Heart left ventricle (tissue), 16 donors: ENCODE measurements at regions of chr14 and their contacts with region 1.

Region 1: DNA sequence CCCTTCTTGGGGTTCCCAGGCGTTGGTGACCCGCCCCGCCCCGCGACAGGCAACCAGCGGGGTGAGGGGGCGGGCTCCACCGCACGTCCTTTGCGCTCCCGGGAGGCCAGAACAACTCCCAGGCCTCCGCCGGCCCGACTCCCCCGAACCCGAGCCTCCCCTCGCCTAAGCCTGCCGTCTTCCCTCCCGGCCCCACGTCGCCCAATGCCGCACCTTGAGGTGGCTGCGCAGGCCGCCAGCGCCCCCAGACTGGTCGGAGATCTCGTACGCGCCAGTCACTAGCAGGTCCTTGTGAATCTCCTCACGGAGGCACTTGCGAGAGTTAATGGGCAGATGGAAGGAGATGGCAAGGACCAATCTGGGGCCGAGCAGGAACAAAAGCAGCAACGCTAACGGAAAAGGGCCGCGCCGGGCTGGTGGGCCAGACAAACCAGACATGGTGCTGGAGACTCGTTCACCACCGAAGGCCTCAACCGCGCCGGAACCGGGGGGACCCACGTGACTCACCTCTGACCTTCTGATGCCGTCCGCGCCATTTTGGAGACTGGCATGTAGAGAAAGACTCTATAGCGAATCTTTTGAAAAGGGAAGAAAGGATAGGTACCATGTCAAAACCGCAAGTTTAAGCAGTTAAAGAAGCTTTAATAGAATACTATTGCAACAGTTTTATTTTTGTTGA is at the start of gene TMED10:
- DNase-seq: peak; percentile 87 to 95 (median 90)
- ATAC-seq: peak; percentile 95 to 97 (median 96)
- H3K4me3 ChIP-seq: peak within 1 kb of the TSS; percentile 70 to 99 (median 89)
- H3K27ac ChIP-seq: peak within 1 kb of the TSS; percentile 87 to 98 (median 96)
- H3K4me1 ChIP-seq: peaks cover 3 to 48% (median 25%) of the 10 kb centered on the region in 12 donors
- H3K27me3 ChIP-seq: no peaks in the 10 kb centered on the region
- CTCF ChIP-seq: peak in 2 of 12 donors; percentile 1 to 23
- POLR2A ChIP-seq: peak in 1 of 2 donors; percentile 36
- total RNA-seq, gene TMED10: 235 to 362 (median 275) TPM

Region 2: DNA sequence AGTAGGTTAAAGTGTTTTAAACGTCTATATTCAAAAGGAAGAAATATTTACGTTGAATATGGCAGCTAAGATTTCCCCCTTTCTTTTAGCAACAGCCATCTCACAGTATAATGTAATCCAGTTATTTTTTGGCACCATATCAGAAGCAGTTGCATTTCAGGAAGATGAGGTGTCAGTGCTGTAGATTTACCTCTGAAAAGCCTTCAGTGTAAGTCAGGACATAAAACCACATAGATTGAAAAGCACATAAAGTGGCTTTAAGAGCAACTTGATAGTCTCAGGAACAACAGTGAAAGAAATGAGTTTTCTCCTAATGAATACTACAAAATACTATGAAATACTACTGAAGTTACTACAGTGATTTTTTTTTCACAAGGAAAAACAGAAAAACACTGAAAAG is 132.0 kb before region 1 on chr14:
- intact Hi-C with region 1: no loop called
- DNase-seq: no peak
- ATAC-seq: no peak
- H3K4me3 ChIP-seq: no peak overlapping the region
- H3K27ac ChIP-seq: no peak overlapping the region
- H3K4me1 ChIP-seq: peaks cover 0 to 38% (median 14%) of the 10 kb centered on the region in 12 donors
- H3K27me3 ChIP-seq: no peaks in the 10 kb centered on the region
- CTCF ChIP-seq: no peak
- POLR2A ChIP-seq: no peak

Region 3: GRCh38 chr14:75126679-75127473 is 49.4 kb before region 1 on chr14 and contains the start of gene NEK9:
- intact Hi-C with region 1: loop called in 3 of 10 experiments (anchors 5 kb)
- DNase-seq: peak; percentile 93 to 94 (median 93)
- ATAC-seq: peak; percentile 94 to 96 (median 96)
- H3K4me3 ChIP-seq: peak within 1 kb of the TSS; percentile 57 to 96 (median 80)
- H3K27ac ChIP-seq: peak within 1 kb of the TSS; percentile 87 to 99 (median 97)
- H3K4me1 ChIP-seq: peaks cover 3 to 47% (median 29%) of the 10 kb centered on the region in 12 donors
- H3K27me3 ChIP-seq: no peaks in the 10 kb centered on the region
- CTCF ChIP-seq: peak in 2 of 12 donors; percentile 11 to 14
- POLR2A ChIP-seq: peak in 1 of 2 donors; percentile 56
- total RNA-seq, gene NEK9: 69.0 to 114 (median 98.3) TPM

Region 4: GRCh38 chr14:75141967-75142366 is 34.3 kb before region 1 on chr14:
- intact Hi-C with region 1: loop called in 1 of 10 experiments (anchors 5 kb)
- DNase-seq: no peak
- ATAC-seq: peak in 2 of 4 donors; percentile 32 to 55
- H3K4me3 ChIP-seq: no peak overlapping the region
- H3K27ac ChIP-seq: peak overlapping the region in 2 of 12 donors; percentile 30 to 60
- H3K4me1 ChIP-seq: peaks cover 6 to 92% (median 48%) of the 10 kb centered on the region in 12 donors
- H3K27me3 ChIP-seq: no peaks in the 10 kb centered on the region
- CTCF ChIP-seq: peak in 10 of 12 donors; percentile 12 to 50 (median 41)
- POLR2A ChIP-seq: no peak

Region 5: GRCh38 chr14:75236901-75237419 is 60.7 kb after region 1 on chr14:
- intact Hi-C with region 1: loop called in 4 of 10 experiments (anchors 1 to 10 kb)
- DNase-seq: no peak
- ATAC-seq: peak in 1 of 4 donors; percentile 1
- H3K4me3 ChIP-seq: no peak overlapping the region
- H3K27ac ChIP-seq: peak overlapping the region; percentile 79 to 97 (median 88)
- H3K4me1 ChIP-seq: peaks cover 0 to 49% (median 29%) of the 10 kb centered on the region in 12 donors
- H3K27me3 ChIP-seq: no peaks in the 10 kb centered on the region
- CTCF ChIP-seq: no peak
- POLR2A ChIP-seq: no peak

Region 6: GRCh38 chr14:75278422-75279161 is 102.3 kb after region 1 on chr14 and contains the start of gene FOS:
- intact Hi-C with region 1: loop called in 3 of 10 experiments (anchors 5 kb)
- DNase-seq: peak; percentile 94 to 95 (median 94)
- ATAC-seq: peak; percentile 73 to 82 (median 80)
- H3K4me3 ChIP-seq: peak within 1 kb of the TSS; percentile 56 to 98 (median 88)
- H3K27ac ChIP-seq: peak within 1 kb of the TSS; percentile 91 to 100 (median 99)
- H3K4me1 ChIP-seq: peaks cover 6 to 71% (median 32%) of the 10 kb centered on the region in 12 donors
- H3K27me3 ChIP-seq: no peaks in the 10 kb centered on the region
- CTCF ChIP-seq: no peak
- POLR2A ChIP-seq: peak; percentile 85 to 99
- total RNA-seq, gene FOS: 6.5 to 549 (median 28.6) TPM